ENCODE measurements at regions of chr10 and their contacts with region 1.

Region 1: DNA sequence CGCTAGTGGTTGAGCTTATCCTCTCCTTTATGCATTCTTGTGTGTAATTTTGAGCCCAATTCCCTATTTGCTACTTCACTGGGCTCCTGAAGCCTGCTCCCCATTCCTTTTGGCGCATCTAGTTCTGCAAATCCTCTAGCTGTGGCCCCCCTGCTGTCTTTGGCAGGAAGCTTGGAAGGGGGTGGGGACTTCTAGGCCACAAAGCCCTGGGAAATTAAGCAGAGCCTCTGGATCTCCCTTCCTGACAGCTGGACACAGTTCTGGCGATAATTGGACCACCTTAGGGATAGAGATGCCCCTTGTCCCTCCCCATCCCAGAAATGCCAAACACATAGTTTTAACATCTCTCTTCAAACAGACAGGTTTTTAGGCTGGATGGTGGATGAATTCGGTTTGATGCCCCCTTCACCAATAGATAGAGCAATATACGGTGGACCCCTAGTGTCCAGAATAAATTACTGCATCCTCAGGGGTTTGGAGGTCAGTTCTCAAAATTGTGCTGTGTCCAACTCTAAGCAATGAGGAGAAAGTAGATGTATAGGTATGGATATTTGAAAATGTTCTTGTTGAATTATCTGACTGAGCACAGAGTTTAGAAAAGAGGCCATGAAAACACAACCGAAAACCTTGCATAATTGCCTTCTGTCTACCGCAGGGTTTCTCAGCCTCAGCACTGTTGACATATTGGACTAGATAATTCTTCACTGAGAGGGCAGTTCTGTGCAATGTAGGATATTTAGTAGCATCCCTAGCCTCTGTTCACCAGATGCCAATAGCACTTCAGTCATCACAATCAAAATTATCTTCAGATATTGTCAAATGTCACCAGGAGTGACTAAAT is 75.5 kb downstream of the PAPSS2 start:
- DNase-seq: no peak
- ATAC-seq: peak; percentile 95
- H3K4me3 ChIP-seq: no peak overlapping the region
- H3K27ac ChIP-seq: no peak overlapping the region
- H3K4me1 ChIP-seq: no peaks in the 10 kb centered on the region
- H3K27me3 ChIP-seq: no peaks in the 10 kb centered on the region
- CTCF ChIP-seq: peak; percentile 91

Region 2: DNA sequence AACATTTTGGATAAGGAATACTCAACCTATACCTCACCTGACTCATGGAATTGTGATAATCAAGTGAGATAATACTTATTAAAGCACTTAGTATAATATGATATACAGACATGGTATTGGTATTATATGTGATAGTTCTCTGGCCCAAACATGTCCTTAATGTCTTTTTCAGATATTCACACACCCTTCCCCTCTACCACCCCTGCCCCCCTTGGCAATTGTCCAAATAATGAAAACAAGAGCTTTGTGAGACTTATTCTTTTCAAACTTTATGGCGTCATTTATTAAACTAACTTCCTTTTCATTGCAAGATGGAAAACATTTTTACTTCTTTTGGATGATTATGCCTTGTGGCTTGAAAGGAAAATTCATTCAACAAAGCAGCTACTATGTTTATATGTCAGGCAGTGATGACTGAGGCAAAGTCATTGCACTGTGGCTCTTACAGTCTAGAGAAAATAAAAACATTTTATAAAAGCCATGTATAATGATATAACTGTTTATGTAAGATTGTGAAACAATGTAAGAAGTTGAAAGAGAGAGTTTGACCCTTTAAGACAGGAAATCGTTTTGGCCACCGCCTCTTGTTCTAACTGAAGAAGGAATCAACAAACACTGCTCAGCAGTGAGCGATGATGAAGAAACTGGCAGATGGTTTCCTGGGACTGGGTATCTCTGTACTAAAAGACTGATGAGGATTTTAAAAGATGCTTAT is 203.1 kb before region 1 on chr10:
- CTCF ChIA-PET with region 1: interaction called, 7 read pairs
- POLR2A ChIA-PET with region 1: no interaction called
- in situ Hi-C with region 1: no loop called
- intact Hi-C with region 1: loop called (anchors 5 kb)
- DNase-seq: no peak
- ATAC-seq: no peak
- H3K4me3 ChIP-seq: no peak overlapping the region
- H3K27ac ChIP-seq: no peak overlapping the region
- H3K4me1 ChIP-seq: no peaks in the 10 kb centered on the region
- H3K27me3 ChIP-seq: no peaks in the 10 kb centered on the region
- CTCF ChIP-seq: no peak

Region 3: DNA sequence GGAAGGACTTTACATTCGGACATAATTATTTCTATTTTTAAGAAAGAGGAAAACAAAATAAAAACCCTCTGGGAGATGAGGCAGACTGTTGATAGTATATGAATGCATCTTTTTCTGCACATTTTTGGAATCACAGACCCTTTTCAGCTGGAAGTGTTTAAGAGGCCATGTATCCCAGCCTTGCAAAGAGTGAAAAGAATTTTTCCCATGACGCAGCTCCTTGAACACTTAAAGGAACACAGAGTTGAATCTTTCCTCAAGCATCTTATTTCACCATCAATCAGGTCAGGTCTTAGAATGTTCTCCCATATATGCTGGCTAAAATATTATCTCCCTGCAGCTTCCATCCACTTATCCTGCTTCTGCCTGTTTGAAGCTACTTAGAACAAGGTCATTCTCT is 121.5 kb before region 1 on chr10:
- CTCF ChIA-PET with region 1: interaction called, 12 read pairs
- POLR2A ChIA-PET with region 1: no interaction called
- in situ Hi-C with region 1: no loop called
- intact Hi-C with region 1: no loop called
- DNase-seq: no peak
- ATAC-seq: no peak
- H3K4me3 ChIP-seq: no peak overlapping the region
- H3K27ac ChIP-seq: no peak overlapping the region
- H3K4me1 ChIP-seq: no peaks in the 10 kb centered on the region
- H3K27me3 ChIP-seq: no peaks in the 10 kb centered on the region
- CTCF ChIP-seq: no peak

Region 4: DNA sequence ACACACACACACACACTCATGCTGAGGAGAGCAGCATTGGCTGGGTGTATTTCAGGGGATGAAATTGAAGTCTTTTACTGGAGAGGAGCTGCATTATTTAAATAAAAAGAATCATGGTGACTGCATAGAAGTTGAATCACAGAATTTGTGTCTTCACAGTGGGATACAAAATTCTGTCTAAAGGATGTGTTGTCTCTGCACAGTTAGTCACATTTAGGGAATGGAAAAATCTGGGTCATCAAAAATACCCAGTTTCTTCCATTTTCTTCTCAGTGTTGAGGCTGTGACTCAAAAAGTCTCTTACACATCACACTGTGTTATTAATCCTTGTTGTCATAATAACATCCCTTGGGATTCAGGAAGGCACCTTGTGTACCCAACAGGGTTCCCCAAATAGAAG is 64.6 kb before region 1 on chr10:
- CTCF ChIA-PET with region 1: no interaction called
- POLR2A ChIA-PET with region 1: no interaction called
- in situ Hi-C with region 1: no loop called
- intact Hi-C with region 1: loop called (anchors 1 kb)
- DNase-seq: no peak
- ATAC-seq: no peak
- H3K4me3 ChIP-seq: no peak overlapping the region
- H3K27ac ChIP-seq: no peak overlapping the region
- H3K4me1 ChIP-seq: no peaks in the 10 kb centered on the region
- H3K27me3 ChIP-seq: no peaks in the 10 kb centered on the region
- CTCF ChIP-seq: no peak

Measured in Panc1 (cell line).